CD8-positive, alpha-beta T cell (primary cell): ENCODE measurements at regions of chr18 and their contacts with region 1.

Region 1: DNA sequence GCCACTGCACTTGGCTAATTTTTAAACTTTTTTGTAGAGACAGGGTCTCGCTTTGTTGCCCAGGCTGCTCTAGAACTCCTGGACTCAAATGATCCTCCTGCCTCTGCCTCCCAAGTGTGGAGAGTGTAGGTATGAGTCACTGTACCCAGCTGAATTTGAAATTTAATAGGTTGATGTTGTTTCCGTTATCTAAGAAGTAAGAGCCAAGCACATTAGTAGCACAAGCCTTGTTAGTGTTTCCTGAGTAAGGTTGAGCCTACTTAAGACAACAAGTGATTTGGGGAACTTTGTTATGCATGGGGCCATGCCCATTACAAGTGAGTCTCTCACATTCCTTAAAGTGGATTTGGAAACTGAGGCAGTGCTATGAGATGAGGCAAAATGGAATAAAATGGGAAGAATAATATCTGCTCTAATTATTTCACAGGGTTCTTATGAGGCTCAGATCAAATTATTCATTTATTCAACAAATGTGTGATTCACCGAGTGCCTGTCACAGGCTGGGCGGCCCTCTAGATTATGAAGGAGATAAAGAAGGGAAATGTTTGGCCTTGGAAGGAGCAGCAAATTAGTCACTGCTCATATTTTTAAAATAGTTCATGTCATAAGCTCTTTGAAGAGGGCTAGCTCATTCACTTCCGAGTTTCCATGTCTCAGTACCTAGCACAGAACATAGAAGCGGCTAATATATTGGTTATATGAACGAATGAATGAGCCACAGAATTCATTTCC is 217.2 kb downstream of the LDLRAD4 start:
- DNase-seq: no peak
- ATAC-seq: no peak
- H3K4me3 ChIP-seq: no peak overlapping the region
- H3K4me3 Mint-ChIP-seq: no peak overlapping the region
- H3K27ac ChIP-seq: no peak overlapping the region
- H3K27ac Mint-ChIP-seq: peak overlapping the region; percentile 67
- H3K4me1 ChIP-seq: peaks cover 39% of the 10 kb centered on the region
- H3K4me1 Mint-ChIP-seq: peaks cover 43% of the 10 kb centered on the region
- H3K27me3 ChIP-seq: no peaks in the 10 kb centered on the region
- H3K27me3 Mint-ChIP-seq: no peaks in the 10 kb centered on the region
- CTCF ChIP-seq: no peak

Region 2: GRCh38 chr18:12408247-12408869 is 1027.4 kb before region 1 on chr18:
- CTCF ChIA-PET with region 1: no interaction called
- POLR2A ChIA-PET with region 1: no interaction called
- intact Hi-C with region 1: no loop called
- DNase-seq: peak in 3 of 9 experiments; percentile 31 to 52 (median 42)
- ATAC-seq: peak; percentile 9
- H3K4me3 ChIP-seq: peak overlapping the region in 1 of 2 experiments; percentile 71
- H3K4me3 Mint-ChIP-seq: peak overlapping the region; percentile 72
- H3K27ac ChIP-seq: no peak overlapping the region
- H3K27ac Mint-ChIP-seq: peak overlapping the region; percentile 30
- H3K4me1 ChIP-seq: peaks cover 18% of the 10 kb centered on the region
- H3K4me1 Mint-ChIP-seq: peaks cover 21% of the 10 kb centered on the region
- H3K27me3 ChIP-seq: no peaks in the 10 kb centered on the region
- H3K27me3 Mint-ChIP-seq: peaks cover 10% of the 10 kb centered on the region
- CTCF ChIP-seq: no peak

Region 3: DNA sequence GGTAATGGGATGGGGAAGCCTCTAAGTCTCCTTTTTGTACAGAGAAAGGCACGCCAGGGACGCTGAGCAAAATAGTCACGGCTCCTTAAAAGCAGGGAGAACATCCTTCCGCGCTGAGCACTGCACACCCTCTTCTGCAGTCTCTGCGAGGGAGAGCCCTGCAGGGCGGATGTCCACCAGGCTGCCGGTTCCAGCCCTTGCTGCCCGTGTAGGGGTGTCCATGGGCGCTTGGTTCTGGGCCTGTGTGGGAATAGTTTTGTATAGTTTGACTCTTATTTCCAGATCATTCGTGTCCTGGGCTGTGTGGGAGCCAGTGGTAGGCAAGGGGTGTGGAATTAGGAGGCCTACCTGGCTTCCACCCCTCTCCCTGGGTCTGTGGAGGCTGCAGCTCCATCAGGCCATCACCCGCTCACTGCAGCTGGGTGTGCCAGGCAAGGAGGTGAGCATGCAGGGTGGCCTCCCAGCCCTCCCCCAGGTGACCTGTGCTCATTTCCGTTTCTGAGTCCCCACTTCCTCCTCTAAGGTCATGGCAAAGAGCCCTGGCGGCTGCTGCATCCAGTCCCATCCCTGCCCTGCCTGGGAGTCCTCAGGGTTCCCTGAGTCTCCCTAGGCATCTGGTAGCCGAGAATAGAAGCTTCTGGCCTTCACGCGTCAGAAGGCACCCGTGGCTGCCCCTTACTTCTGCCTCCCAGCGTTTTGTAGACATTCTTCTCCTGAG is 14.6 kb before region 1 on chr18:
- CTCF ChIA-PET with region 1: no interaction called
- POLR2A ChIA-PET with region 1: no interaction called
- intact Hi-C with region 1: loop called in 1 of 2 experiments (anchors 1 kb)
- DNase-seq: no peak
- ATAC-seq: no peak
- H3K4me3 ChIP-seq: no peak overlapping the region
- H3K4me3 Mint-ChIP-seq: no peak overlapping the region
- H3K27ac ChIP-seq: no peak overlapping the region
- H3K27ac Mint-ChIP-seq: no peak overlapping the region
- H3K4me1 ChIP-seq: peaks cover 18% of the 10 kb centered on the region
- H3K4me1 Mint-ChIP-seq: peaks cover 49% of the 10 kb centered on the region
- H3K27me3 ChIP-seq: no peaks in the 10 kb centered on the region
- H3K27me3 Mint-ChIP-seq: no peaks in the 10 kb centered on the region
- CTCF ChIP-seq: no peak

Region 4: DNA sequence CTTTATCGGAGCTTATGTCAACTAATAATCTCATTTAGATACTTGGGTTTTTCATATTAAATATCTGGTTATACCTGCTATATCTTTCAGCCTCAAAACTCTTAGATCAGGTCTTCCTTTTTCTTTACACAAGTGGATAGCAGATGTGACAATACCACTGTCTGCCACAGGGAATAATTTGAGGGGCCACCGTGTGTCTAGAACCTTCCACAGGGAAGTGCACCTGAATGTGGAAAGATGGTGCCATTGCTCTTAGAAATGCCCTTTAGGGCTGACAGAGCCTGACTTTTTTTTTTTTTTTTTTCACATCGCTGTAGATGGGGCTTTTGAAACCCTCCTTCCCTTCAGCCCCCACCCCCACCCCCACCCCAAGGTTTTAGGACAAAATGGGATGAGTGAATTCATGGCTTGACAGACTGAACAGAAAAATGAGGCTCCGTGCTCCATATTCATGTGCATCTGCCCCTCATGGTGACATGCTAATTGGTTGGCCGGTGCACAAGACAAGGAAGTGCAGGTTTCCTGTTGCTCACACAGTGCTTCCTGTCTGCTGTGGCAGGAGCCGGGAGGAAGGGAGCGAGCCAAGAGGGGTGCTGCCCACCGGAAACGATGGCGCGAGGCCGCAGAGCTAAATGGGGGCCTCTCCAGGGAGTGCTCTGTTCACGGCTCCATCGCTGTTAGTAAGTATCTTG is 28.8 kb after region 1 on chr18:
- CTCF ChIA-PET with region 1: no interaction called
- POLR2A ChIA-PET with region 1: no interaction called
- intact Hi-C with region 1: loop called in 1 of 2 experiments (anchors 2 kb)
- DNase-seq: peak; percentile 33 to 86 (median 76)
- ATAC-seq: peak; percentile 92
- H3K4me3 ChIP-seq: peak overlapping the region; percentile 60 to 73
- H3K4me3 Mint-ChIP-seq: peak overlapping the region; percentile 91
- H3K27ac ChIP-seq: peak overlapping the region; percentile 66 to 78
- H3K27ac Mint-ChIP-seq: peak overlapping the region; percentile 97
- H3K4me1 ChIP-seq: peaks cover 44% of the 10 kb centered on the region
- H3K4me1 Mint-ChIP-seq: peaks cover 71% of the 10 kb centered on the region
- H3K27me3 ChIP-seq: no peaks in the 10 kb centered on the region
- H3K27me3 Mint-ChIP-seq: no peaks in the 10 kb centered on the region
- CTCF ChIP-seq: no peak

Region 5: GRCh38 chr18:13513021-13513420 is 77.3 kb after region 1 on chr18:
- CTCF ChIA-PET with region 1: no interaction called
- POLR2A ChIA-PET with region 1: no interaction called
- intact Hi-C with region 1: no loop called
- DNase-seq: peak in 2 of 9 experiments; percentile 13 to 15
- ATAC-seq: peak; percentile 42
- H3K4me3 ChIP-seq: no peak overlapping the region
- H3K4me3 Mint-ChIP-seq: no peak overlapping the region
- H3K27ac ChIP-seq: no peak overlapping the region
- H3K27ac Mint-ChIP-seq: peak overlapping the region; percentile 56
- H3K4me1 ChIP-seq: peaks cover 17% of the 10 kb centered on the region
- H3K4me1 Mint-ChIP-seq: peaks cover 51% of the 10 kb centered on the region
- H3K27me3 ChIP-seq: no peaks in the 10 kb centered on the region
- H3K27me3 Mint-ChIP-seq: no peaks in the 10 kb centered on the region
- CTCF ChIP-seq: no peak